Caco-2 (cell line): ENCODE measurements at regions of chr17 and their contacts with region 1.

Region 1: GRCh38 chr17:47751471-47751870 is 18.4 kb downstream of the TBX21 start:
- DNase-seq: no peak
- H3K4me3 ChIP-seq: no peak overlapping the region
- H3K4me3 Mint-ChIP-seq: no peak overlapping the region
- H3K27ac Mint-ChIP-seq: no peak overlapping the region
- H3K4me1 ChIP-seq: no peaks in the 10 kb centered on the region
- H3K4me1 Mint-ChIP-seq: no peaks in the 10 kb centered on the region
- H3K27me3 ChIP-seq: no peaks in the 10 kb centered on the region
- H3K27me3 Mint-ChIP-seq: peaks cover 30% of the 10 kb centered on the region
- CTCF ChIP-seq: no peak

Region 2: GRCh38 chr17:47413872-47414271 is 337.6 kb before region 1 on chr17:
- CTCF ChIA-PET with region 1: no interaction called
- POLR2A ChIA-PET with region 1: no interaction called
- intact Hi-C with region 1: no loop called
- DNase-seq: no peak
- H3K4me3 ChIP-seq: no peak overlapping the region
- H3K4me3 Mint-ChIP-seq: no peak overlapping the region
- H3K27ac Mint-ChIP-seq: no peak overlapping the region
- H3K4me1 ChIP-seq: no peaks in the 10 kb centered on the region
- H3K4me1 Mint-ChIP-seq: no peaks in the 10 kb centered on the region
- H3K27me3 ChIP-seq: no peaks in the 10 kb centered on the region
- H3K27me3 Mint-ChIP-seq: no peaks in the 10 kb centered on the region
- CTCF ChIP-seq: no peak

Region 3: GRCh38 chr17:47763913-47764582 is 12.6 kb after region 1 on chr17:
- CTCF ChIA-PET with region 1: interaction called, 11 read pairs
- POLR2A ChIA-PET with region 1: no interaction called
- intact Hi-C with region 1: no loop called
- DNase-seq: no peak
- H3K4me3 ChIP-seq: no peak overlapping the region
- H3K4me3 Mint-ChIP-seq: no peak overlapping the region
- H3K27ac Mint-ChIP-seq: no peak overlapping the region
- H3K4me1 ChIP-seq: no peaks in the 10 kb centered on the region
- H3K4me1 Mint-ChIP-seq: no peaks in the 10 kb centered on the region
- H3K27me3 ChIP-seq: no peaks in the 10 kb centered on the region
- H3K27me3 Mint-ChIP-seq: peaks cover 19% of the 10 kb centered on the region
- CTCF ChIP-seq: no peak